WTC11 (cell line): ENCODE measurements at regions of chr14 and their contacts with region 1.

Region 1: DNA sequence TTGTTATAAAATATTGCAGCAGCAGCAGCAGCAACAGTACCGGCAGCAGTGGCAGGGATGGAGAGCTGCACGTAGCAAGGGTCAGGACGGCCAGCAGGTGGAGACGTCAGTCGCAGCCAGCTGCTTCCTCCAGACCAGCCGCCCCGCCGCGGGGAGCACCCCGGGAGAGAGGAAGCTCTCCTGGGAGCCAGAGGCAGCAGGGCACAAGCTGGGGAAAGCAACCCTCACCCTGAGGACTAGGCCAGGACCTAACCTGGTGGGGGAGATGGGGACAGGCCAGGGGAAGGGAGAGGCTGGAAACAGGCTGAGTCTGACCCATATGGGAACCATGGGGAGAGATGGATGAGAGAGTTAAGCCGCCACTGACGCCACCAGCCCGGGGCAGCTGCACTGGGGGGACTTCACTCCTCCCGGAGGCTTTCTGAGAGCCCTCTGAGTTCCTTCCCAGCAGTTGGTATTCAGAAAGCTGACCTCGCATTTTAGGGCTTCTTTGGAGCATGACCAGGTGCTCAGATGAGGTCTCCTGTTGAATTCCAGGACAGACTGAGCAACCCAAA is 56.3 kb downstream of the SPTB start:
- DNase-seq: peak; percentile 86
- ATAC-seq: peak; percentile 91
- H3K4me3 Mint-ChIP-seq: peak overlapping the region; percentile 31; the same call in 1 of the 2 replicates
- H3K27ac Mint-ChIP-seq: no peak overlapping the region
- H3K4me1 Mint-ChIP-seq: peaks cover 27% of the 10 kb centered on the region
- H3K27me3 Mint-ChIP-seq: peaks cover 6% of the 10 kb centered on the region; the same call in 1 of the 2 replicates
- CTCF ChIP-seq: peak; percentile 69; the same call in 1 of the 2 replicates

Region 2: DNA sequence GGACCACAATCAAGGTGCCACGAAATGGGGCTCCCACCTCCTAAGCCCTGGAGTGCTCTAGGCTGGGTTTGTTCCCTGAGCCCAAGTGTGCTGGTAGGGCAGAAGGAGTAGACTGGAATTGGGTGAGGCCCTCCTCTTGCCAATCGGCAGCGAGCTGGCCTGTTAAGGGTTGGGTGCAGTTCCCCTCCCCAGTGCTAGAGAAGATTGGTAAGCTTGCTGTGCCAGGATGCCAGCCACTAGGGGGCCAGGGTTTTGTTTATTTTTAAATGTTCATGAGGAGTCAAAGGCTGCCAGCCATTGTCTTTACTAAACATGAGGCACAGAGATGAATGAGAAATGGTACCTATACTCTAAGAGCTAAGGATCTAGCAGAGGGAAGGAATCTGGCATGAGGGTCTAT is 23.4 kb before region 1 on chr14:
- CTCF ChIA-PET with region 1: interaction called, 15 read pairs
- POLR2A ChIA-PET with region 1: no interaction called
- DNase-seq: peak; percentile 38
- ATAC-seq: peak; percentile 49
- H3K4me3 Mint-ChIP-seq: no peak overlapping the region
- H3K27ac Mint-ChIP-seq: no peak overlapping the region
- H3K4me1 Mint-ChIP-seq: peaks cover 3% of the 10 kb centered on the region; the same call in 1 of the 2 replicates
- H3K27me3 Mint-ChIP-seq: no peaks in the 10 kb centered on the region; the same call in 1 of the 2 replicates
- CTCF ChIP-seq: 0 out of 2 replicates have a peak, but pooled peaks have one; percentile 26

Region 3: GRCh38 chr14:64841121-64841651 is 17.8 kb after region 1 on chr14:
- CTCF ChIA-PET with region 1: interaction called, 51 read pairs
- POLR2A ChIA-PET with region 1: no interaction called
- DNase-seq: peak; percentile 58
- ATAC-seq: peak; percentile 96
- H3K4me3 Mint-ChIP-seq: no peak overlapping the region
- H3K27ac Mint-ChIP-seq: peak overlapping the region; percentile 14
- H3K4me1 Mint-ChIP-seq: peaks cover 19% of the 10 kb centered on the region
- H3K27me3 Mint-ChIP-seq: no peaks in the 10 kb centered on the region
- CTCF ChIP-seq: peak; percentile 39; the same call in 1 of the 2 replicates

Region 4: GRCh38 chr14:64868379-64868778 is 45.0 kb after region 1 on chr14:
- CTCF ChIA-PET with region 1: interaction called, 29 read pairs
- POLR2A ChIA-PET with region 1: interaction called, 7 read pairs
- DNase-seq: no peak
- ATAC-seq: no peak
- H3K4me3 Mint-ChIP-seq: no peak overlapping the region
- H3K27ac Mint-ChIP-seq: no peak overlapping the region
- H3K4me1 Mint-ChIP-seq: peaks cover 15% of the 10 kb centered on the region
- H3K27me3 Mint-ChIP-seq: no peaks in the 10 kb centered on the region; the same call in 1 of the 2 replicates
- CTCF ChIP-seq: no peak

Region 5: GRCh38 chr14:64910847-64911495 is 87.6 kb after region 1 on chr14:
- CTCF ChIA-PET with region 1: interaction called, 37 read pairs
- POLR2A ChIA-PET with region 1: interaction called, 4 read pairs
- DNase-seq: no peak
- ATAC-seq: no peak
- H3K4me3 Mint-ChIP-seq: no peak overlapping the region
- H3K27ac Mint-ChIP-seq: no peak overlapping the region
- H3K4me1 Mint-ChIP-seq: peaks cover 11% of the 10 kb centered on the region
- H3K27me3 Mint-ChIP-seq: no peaks in the 10 kb centered on the region; the same call in none of the 2 replicates
- CTCF ChIP-seq: peak; percentile 41; the same call in 1 of the 2 replicates

Region 6: GRCh38 chr14:64993266-64993930 is 170.0 kb after region 1 on chr14:
- CTCF ChIA-PET with region 1: no interaction called
- POLR2A ChIA-PET with region 1: no interaction called
- DNase-seq: no peak
- ATAC-seq: no peak
- H3K4me3 Mint-ChIP-seq: no peak overlapping the region
- H3K27ac Mint-ChIP-seq: no peak overlapping the region
- H3K4me1 Mint-ChIP-seq: peaks cover 22% of the 10 kb centered on the region
- H3K27me3 Mint-ChIP-seq: no peaks in the 10 kb centered on the region
- CTCF ChIP-seq: no peak